Activated T-helper 1 cell treated with anti-CD3 and anti-CD28 coated beads, Interleukin-12 subunit alpha, Interleukin-12 subunit beta, Interleukin-2, Interleukin-4 antibody, amounts not matched to agents 30 ng/mL and 10 ng/mL and 1 ng/mL, durations not matched to agents 14 hours and 24 hours and 36 hours (primary cell): ENCODE measurements at regions of chr6 and their contacts with region 1.

Region 1: GRCh38 chr6:113447088-113447831 is 409.9 kb upstream of the MARCKS start:
- DNase-seq: no peak
- H3K4me3 Mint-ChIP-seq: no peak overlapping the region
- H3K27ac Mint-ChIP-seq: no peak overlapping the region
- H3K4me1 Mint-ChIP-seq: no peaks in the 10 kb centered on the region
- H3K27me3 Mint-ChIP-seq: no peaks in the 10 kb centered on the region

Region 2: DNA sequence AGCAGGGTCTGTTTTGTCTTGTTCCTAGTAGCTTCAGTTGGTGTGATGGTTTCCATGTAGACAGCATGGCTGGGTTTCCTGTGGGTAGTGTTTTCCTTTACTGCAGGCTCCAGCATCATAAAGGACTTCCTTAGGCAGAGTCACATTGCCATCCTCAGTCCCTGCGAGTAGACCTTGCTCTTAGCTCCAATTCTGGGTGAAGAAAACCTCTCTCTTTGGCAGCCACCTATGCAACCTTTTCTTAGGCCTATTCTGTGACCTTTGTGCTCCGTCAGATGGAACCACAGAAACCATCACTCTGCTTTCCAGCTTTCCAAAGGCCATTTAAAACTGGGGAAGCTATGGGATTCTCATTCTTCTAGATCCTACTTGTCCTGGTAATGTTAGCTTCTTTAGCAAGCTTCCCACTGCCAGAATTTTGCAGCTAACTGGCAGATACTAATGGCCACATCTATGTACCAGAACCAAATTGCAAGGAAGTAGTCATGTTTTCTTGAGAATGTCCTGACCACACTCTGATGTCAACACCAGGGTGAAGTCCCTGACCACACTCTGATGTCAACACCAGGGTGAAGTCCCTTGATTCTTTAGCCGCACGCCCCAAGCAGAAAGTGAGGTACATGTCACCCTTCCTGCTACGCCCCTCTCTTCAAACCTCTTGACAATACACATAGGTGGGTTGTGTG is 1542.2 kb after region 1 on chr6:
- intact Hi-C with region 1: loop called (anchors 5 kb)
- DNase-seq: peak; percentile 66
- H3K4me3 Mint-ChIP-seq: peak overlapping the region; percentile 47
- H3K27ac Mint-ChIP-seq: peak overlapping the region; percentile 96
- H3K4me1 Mint-ChIP-seq: peaks cover 30% of the 10 kb centered on the region
- H3K27me3 Mint-ChIP-seq: peaks cover 2% of the 10 kb centered on the region